Psoas muscle (tissue), 8 donors: ENCODE measurements at regions of chr10 and their contacts with region 1.

Region 1: GRCh38 chr10:27319752-27320561 is 79.4 kb upstream of the ACBD5 start:
- DNase-seq: peak; percentile 64 to 74
- ATAC-seq: peak; percentile 34 to 73 (median 71)
- H3K4me3 ChIP-seq: peak overlapping the region; percentile 49
- H3K27ac ChIP-seq: peak overlapping the region; percentile 57
- H3K4me1 ChIP-seq: no peaks in the 10 kb centered on the region
- H3K27me3 ChIP-seq: peaks cover 0 to 10% (median 8%) of the 10 kb centered on the region in 3 donors
- CTCF ChIP-seq: no peak

Region 2: GRCh38 chr10:25405871-25406270 is 1914.1 kb before region 1 on chr10:
- intact Hi-C with region 1: no loop called
- DNase-seq: no peak
- ATAC-seq: no peak
- H3K4me3 ChIP-seq: no peak overlapping the region
- H3K27ac ChIP-seq: no peak overlapping the region
- H3K4me1 ChIP-seq: no peaks in the 10 kb centered on the region
- H3K27me3 ChIP-seq: no peaks in the 10 kb centered on the region
- CTCF ChIP-seq: no peak

Region 3: DNA sequence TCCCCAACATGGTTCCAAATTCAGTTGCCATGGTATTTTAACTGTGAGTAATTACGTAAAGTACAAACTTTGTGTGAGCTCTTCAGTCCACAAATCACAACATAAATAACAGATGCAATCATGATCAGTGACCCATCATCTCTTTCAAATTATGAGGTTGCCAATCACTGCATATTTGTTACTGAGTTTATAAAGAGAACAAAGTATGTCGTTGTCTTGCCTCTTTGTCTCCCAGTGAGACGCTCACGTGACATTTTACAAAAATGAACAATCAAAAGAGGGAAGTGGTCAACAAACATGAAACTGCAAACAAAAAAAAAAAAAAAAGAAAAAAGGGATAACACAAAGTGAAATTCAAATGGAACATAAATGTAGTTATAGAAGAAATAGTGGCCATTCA is 745.2 kb before region 1 on chr10:
- intact Hi-C with region 1: loop called in 1 of 2 experiments (anchors 5 kb)
- DNase-seq: no peak
- ATAC-seq: no peak
- H3K4me3 ChIP-seq: no peak overlapping the region
- H3K27ac ChIP-seq: no peak overlapping the region
- H3K4me1 ChIP-seq: no peaks in the 10 kb centered on the region
- H3K27me3 ChIP-seq: no peaks in the 10 kb centered on the region
- CTCF ChIP-seq: no peak

Region 4: GRCh38 chr10:26621889-26622711 is 697.9 kb before region 1 on chr10:
- intact Hi-C with region 1: loop called in 1 of 2 experiments (anchors 10 kb)
- DNase-seq: peak; percentile 35 to 61
- ATAC-seq: no peak
- H3K4me3 ChIP-seq: peak overlapping the region; percentile 53
- H3K27ac ChIP-seq: no peak overlapping the region
- H3K4me1 ChIP-seq: no peaks in the 10 kb centered on the region
- H3K27me3 ChIP-seq: peaks cover 0 to 20% (median 5%) of the 10 kb centered on the region in 3 donors
- CTCF ChIP-seq: no peak

Region 5: DNA sequence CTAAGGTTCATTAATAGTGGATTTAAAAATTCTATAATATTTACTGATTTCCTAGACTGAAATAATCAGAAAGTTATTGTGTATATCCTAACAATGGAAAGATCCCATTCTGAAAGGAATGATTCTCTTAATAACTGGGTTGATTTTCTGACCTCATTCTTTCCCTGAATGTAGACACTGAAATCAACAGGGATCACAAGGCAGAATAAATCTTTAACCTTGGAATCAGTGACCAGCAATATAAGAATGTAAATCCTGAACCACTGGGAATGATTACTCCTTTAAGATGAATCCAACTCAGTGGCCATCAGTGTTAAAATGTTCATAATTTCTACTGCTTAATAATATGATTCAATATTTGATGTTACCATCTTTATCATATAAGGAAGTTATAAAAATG is 267.3 kb before region 1 on chr10:
- intact Hi-C with region 1: no loop called
- DNase-seq: no peak
- ATAC-seq: no peak
- H3K4me3 ChIP-seq: no peak overlapping the region
- H3K27ac ChIP-seq: no peak overlapping the region
- H3K4me1 ChIP-seq: no peaks in the 10 kb centered on the region
- H3K27me3 ChIP-seq: no peaks in the 10 kb centered on the region
- CTCF ChIP-seq: no peak